Transverse colon (tissue), 4 donors: ENCODE measurements at regions of chrX and their contacts with region 1.

Region 1: DNA sequence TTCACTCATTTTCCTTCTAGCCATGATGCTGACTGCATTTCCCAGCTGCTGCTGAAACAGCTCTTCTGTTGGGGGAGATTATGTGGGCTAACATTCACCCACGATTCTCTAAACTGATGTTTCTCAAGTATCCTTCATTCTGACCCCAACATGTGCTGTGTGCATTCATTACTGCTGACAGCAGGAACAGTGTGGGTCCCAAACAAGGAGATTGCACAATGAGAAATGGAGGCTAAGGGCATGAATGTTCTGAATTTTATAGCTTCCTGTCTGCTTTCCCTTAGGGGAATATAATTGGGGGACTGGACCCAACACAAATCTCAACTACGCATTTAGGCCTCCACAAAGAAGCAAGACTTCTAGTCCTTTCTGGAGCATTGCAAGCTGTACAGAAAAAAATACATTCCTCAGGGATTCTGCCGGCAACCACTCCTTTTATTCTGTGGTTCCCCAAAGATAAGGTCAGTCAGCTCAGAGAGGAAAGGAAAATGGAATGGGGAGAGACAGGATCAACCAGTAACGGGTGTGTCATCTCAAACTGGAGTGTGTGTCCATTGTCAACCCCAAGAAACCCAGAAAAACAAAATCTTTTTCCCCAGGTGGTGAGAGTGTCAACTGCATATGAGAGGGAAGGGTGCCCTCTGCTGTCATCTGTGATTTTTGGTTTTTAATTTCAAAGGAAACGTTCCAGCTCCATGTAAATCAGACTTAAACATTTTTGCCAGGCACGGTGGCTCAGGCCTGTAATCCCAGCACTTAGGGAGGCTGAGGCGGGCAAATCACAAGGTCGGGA is 81.5 kb upstream of the EGFL6 start:
- DNase-seq: peak; percentile 46
- H3K4me3 ChIP-seq: no peak overlapping the region
- H3K27ac ChIP-seq: peak overlapping the region; percentile 62 to 82 (median 80)
- H3K4me1 ChIP-seq: peaks cover 0 to 22% (median 5%) of the 10 kb centered on the region in 4 donors
- H3K27me3 ChIP-seq: no peaks in the 10 kb centered on the region
- CTCF ChIP-seq: peak; percentile 52 to 93 (median 61)
- EP300 ChIP-seq: no peak
- POLR2A ChIP-seq: no peak

Region 2: GRCh38 chrX:12949927-12950656 is 537.8 kb before region 1 on chrX:
- in situ Hi-C with region 1: loop called (anchors 10 to 25 kb)
- intact Hi-C with region 1: no loop called
- DNase-seq: peak; percentile 89
- H3K4me3 ChIP-seq: peak overlapping the region in 1 of 4 donors; percentile 16
- H3K27ac ChIP-seq: peak overlapping the region; percentile 70 to 83 (median 82)
- H3K4me1 ChIP-seq: peaks cover 0 to 25% (median 17%) of the 10 kb centered on the region in 4 donors
- H3K27me3 ChIP-seq: no peaks in the 10 kb centered on the region
- CTCF ChIP-seq: no peak
- EP300 ChIP-seq: no peak
- POLR2A ChIP-seq: peak; percentile 43

Region 3: DNA sequence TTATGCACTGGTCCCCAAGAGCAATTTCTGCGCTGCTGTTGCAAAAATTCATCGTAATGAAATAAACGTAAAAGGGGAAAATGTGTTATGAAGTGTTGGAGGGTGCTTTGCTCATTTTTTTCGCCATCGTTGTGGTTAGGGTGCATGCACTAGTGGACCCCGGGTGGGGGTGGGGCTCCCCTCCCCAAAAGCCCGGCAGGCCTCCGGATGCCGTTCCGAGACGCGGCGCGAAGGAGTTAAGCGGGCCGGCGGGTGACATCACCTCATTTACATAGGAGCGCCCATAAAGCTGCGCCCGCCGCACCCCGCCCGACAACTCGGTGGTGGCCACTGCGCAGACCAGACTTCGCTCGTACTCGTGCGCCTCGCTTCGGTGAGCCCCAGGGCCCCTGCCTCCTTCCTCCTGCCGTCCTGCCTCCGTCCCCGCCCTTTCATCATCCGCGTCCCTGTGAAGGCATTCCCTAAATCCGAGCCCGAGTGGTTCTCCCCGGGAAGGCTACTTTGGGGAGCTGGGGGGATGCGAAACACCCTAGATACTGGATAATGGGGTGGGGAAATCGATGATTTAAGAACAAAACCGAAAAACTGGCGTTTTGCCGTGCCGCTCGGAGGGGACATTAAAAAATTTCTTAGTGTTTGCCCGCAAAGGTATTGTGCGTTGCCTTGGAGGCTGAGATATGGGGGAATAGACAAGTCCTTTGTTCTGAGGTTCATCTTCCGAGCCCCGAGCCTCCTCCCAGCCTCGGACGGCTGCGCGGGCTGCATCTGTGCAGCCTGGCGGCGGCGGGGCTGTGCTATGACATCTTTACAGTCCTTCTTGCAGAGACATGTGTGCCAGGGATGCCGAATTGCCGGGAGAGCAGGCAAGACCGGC is 512.9 kb before region 1 on chrX and contains the start of gene TMSB4X:
- in situ Hi-C with region 1: loop called in 3 of 4 experiments (anchors 25 kb)
- intact Hi-C with region 1: no loop called
- DNase-seq: peak; percentile 89
- H3K4me3 ChIP-seq: peak within 1 kb of the TSS; percentile 55 to 86 (median 64)
- H3K27ac ChIP-seq: peak within 1 kb of the TSS; percentile 90 to 99 (median 94)
- H3K4me1 ChIP-seq: peaks cover 0 to 10% (median 3%) of the 10 kb centered on the region in 4 donors
- H3K27me3 ChIP-seq: no peaks in the 10 kb centered on the region
- CTCF ChIP-seq: no peak
- EP300 ChIP-seq: no peak
- POLR2A ChIP-seq: peak; percentile 99
- total RNA-seq, gene TMSB4X: 680 to 4,578 (median 2,996) TPM

Region 4: GRCh38 chrX:13087322-13088155 is 400.4 kb before region 1 on chrX:
- in situ Hi-C with region 1: loop called in 2 of 4 experiments (anchors 10 to 25 kb)
- intact Hi-C with region 1: no loop called
- DNase-seq: peak; percentile 45
- H3K4me3 ChIP-seq: no peak overlapping the region
- H3K27ac ChIP-seq: peak overlapping the region; percentile 12 to 50 (median 28)
- H3K4me1 ChIP-seq: peaks cover 0 to 19% (median 0%) of the 10 kb centered on the region in 4 donors
- H3K27me3 ChIP-seq: no peaks in the 10 kb centered on the region
- CTCF ChIP-seq: no peak
- EP300 ChIP-seq: no peak
- POLR2A ChIP-seq: no peak

Region 5: DNA sequence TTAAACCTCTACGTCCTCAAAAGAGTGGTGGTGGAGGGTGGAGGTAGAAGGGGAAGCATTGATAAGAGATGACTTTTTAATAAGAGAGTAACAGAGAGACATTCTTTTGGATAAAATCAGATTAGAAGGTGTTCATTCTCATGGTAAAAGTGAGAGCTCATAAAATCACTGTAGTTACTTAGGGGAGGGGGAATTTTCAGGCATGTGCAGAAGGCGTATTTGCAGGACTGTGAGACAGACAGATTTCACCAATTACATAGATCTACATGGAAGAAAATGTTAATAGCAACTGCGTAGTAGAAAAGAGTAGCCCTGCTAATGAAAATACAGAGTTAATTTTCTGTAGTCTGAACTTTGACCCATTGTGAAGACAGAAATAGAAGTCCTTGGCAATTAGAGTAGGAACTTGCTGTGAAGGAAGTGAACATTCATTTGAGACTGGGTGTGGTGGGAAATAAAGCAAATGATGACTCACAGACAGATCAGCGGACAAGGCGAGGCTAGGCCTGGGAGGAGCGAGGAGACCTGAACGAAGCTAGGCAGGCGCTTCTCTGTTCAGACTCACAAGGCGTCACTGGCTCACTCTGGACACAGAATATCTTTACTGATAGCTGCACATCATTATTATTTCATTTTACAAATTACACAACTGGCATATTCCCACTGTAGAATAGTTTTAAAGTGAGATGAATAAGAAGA is 386.3 kb before region 1 on chrX:
- in situ Hi-C with region 1: loop called in 3 of 4 experiments (anchors 10 to 25 kb)
- intact Hi-C with region 1: no loop called
- DNase-seq: peak; percentile 79
- H3K4me3 ChIP-seq: no peak overlapping the region
- H3K27ac ChIP-seq: peak overlapping the region; percentile 45 to 84 (median 66)
- H3K4me1 ChIP-seq: peaks cover 6 to 31% (median 13%) of the 10 kb centered on the region in 4 donors
- H3K27me3 ChIP-seq: no peaks in the 10 kb centered on the region
- CTCF ChIP-seq: no peak
- EP300 ChIP-seq: peak; percentile 87
- POLR2A ChIP-seq: peak; percentile 56

Region 6: GRCh38 chrX:13254076-13254785 is 233.7 kb before region 1 on chrX:
- in situ Hi-C with region 1: loop called in 3 of 4 experiments (anchors 25 kb)
- intact Hi-C with region 1: no loop called
- DNase-seq: peak; percentile 41
- H3K4me3 ChIP-seq: no peak overlapping the region
- H3K27ac ChIP-seq: no peak overlapping the region
- H3K4me1 ChIP-seq: no peaks in the 10 kb centered on the region
- H3K27me3 ChIP-seq: no peaks in the 10 kb centered on the region
- CTCF ChIP-seq: no peak
- EP300 ChIP-seq: no peak
- POLR2A ChIP-seq: no peak

Region 7: GRCh38 chrX:13502590-13502989 is 14.7 kb after region 1 on chrX:
- in situ Hi-C with region 1: no loop called
- intact Hi-C with region 1: no loop called
- DNase-seq: no peak
- H3K4me3 ChIP-seq: no peak overlapping the region
- H3K27ac ChIP-seq: no peak overlapping the region
- H3K4me1 ChIP-seq: no peaks in the 10 kb centered on the region
- H3K27me3 ChIP-seq: no peaks in the 10 kb centered on the region
- CTCF ChIP-seq: no peak
- EP300 ChIP-seq: no peak
- POLR2A ChIP-seq: no peak